GM12878 (cell line): ENCODE measurements at regions of chr6 and their contacts with region 1.

Region 1: DNA sequence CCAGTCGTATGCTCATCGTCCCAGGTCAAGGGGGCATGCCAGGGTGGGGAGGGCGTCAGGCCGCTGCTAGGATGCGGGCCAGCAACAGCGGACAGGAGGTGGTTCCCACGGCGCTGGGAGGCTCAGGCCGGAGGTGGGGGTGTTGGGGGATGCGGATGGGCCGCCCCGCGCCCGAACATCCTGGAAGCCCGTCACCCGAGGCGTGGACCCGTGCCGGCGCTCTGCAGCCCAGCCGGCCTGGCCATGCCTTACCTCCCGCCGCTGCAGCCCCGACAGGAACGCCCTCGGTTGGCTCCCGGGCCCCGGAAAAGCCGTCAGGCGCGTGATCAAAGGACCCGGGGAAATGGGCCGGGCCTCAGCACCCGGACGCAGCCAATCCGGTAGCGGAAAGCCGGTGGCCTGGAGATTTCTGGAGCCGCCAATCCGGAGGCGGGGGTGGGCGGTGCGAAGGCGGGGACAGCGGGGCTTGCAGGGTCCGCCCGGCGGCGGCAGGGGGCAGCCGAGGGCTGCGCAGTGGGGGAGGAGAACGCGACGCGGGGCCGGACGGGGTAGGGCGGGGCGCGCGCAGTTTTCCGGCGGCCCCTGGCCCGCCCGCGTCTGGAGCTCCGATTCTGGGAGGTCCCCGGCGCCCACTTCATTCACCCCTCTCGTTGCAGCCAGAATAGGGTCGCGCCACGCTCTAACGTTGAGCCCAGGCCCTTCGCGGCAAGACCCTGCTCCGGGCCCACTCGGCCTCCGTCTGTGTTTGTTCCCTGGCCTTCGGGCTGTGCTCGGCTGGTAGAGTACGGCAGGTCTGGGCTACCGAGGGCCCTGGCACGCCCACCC is at the start of gene SMIM29:
- DNase-seq: peak; percentile 62
- ATAC-seq: peak; percentile 88
- H3K4me3 ChIP-seq: peak within 1 kb of the TSS; percentile 84
- H3K27ac ChIP-seq: peak within 1 kb of the TSS; percentile 78
- H3K4me1 ChIP-seq: peaks cover 19% of the 10 kb centered on the region
- H3K27me3 ChIP-seq: no peaks in the 10 kb centered on the region
- CTCF ChIP-seq: peak; percentile 82 to 86 (median 86)
- EP300 ChIP-seq: no peak
- POLR2A ChIP-seq: peak; percentile 91
- RAD21 ChIP-seq: peak; percentile 81
- polyA plus RNA-seq, gene SMIM29: 7.1 to 8.4 TPM

Region 2: GRCh38 chr6:33914645-33915044 is 334.3 kb before region 1 on chr6:
- CTCF ChIA-PET with region 1: no interaction called
- POLR2A ChIA-PET with region 1: no interaction called
- RAD21 ChIA-PET with region 1: no interaction called
- SMC1A ChIA-PET with region 1: no interaction called
- in situ Hi-C with region 1: no loop called
- intact Hi-C with region 1: no loop called
- DNase-seq: no peak
- ATAC-seq: peak; percentile 68
- H3K4me3 ChIP-seq: no peak overlapping the region
- H3K27ac ChIP-seq: no peak overlapping the region
- H3K4me1 ChIP-seq: peaks cover 13% of the 10 kb centered on the region
- H3K27me3 ChIP-seq: no peaks in the 10 kb centered on the region
- CTCF ChIP-seq: no peak
- EP300 ChIP-seq: no peak
- POLR2A ChIP-seq: no peak
- RAD21 ChIP-seq: no peak

Region 3: DNA sequence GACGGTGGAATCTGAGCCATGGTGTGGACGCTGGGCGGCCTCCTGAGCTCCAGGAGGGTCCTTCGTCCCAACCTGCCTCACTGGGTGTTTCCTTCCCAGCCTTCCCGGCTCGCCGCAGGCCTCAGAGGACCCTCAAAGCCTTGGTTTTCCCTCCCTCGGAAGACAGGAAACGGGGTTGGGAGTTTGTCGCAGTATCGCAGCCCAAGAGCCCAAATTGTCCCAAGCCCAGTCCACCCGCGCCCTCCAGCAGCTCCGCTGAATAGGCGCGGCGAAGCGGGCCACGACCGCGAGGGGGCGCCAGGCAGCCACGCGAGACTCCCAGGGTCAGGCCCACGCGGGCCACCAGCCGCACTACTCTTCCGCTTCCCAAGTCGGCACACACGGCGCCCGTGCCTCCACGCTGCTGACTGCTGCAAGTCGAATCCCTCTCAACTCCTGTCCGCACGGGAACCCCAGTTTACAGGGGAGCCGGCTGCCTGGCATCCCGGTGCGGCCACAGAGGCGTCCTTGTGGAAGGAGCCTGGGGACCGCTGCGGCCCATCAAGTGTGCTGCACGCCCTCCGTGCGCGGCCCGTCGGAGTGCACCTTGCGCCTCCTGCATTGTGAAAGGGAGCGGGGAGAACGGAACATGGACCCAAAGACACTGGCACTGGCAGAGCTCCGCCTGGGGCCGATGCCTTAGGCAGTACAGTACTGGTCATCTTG is 52.7 kb before region 1 on chr6:
- CTCF ChIA-PET with region 1: interaction called, 55 read pairs
- POLR2A ChIA-PET with region 1: interaction called, 4 read pairs
- RAD21 ChIA-PET with region 1: interaction called, 37 read pairs
- SMC1A ChIA-PET with region 1: interaction called, 20 read pairs
- in situ Hi-C with region 1: no loop called
- intact Hi-C with region 1: loop called (anchors 2 kb)
- DNase-seq: peak; percentile 28
- ATAC-seq: peak; percentile 99
- H3K4me3 ChIP-seq: peak overlapping the region; percentile 64
- H3K27ac ChIP-seq: no peak overlapping the region
- H3K4me1 ChIP-seq: peaks cover 8% of the 10 kb centered on the region
- H3K27me3 ChIP-seq: peaks cover 0 to 2% of the 10 kb centered on the region in 2 experiments; a peak in 1 of 4 replicates
- CTCF ChIP-seq: peak; percentile 94 to 98 (median 96)
- EP300 ChIP-seq: 0 out of 4 replicates have a peak, but pooled peaks of 1 of the 2 experiments have one; percentile 42
- POLR2A ChIP-seq: peak; percentile 77
- RAD21 ChIP-seq: peak; percentile 86

Region 4: DNA sequence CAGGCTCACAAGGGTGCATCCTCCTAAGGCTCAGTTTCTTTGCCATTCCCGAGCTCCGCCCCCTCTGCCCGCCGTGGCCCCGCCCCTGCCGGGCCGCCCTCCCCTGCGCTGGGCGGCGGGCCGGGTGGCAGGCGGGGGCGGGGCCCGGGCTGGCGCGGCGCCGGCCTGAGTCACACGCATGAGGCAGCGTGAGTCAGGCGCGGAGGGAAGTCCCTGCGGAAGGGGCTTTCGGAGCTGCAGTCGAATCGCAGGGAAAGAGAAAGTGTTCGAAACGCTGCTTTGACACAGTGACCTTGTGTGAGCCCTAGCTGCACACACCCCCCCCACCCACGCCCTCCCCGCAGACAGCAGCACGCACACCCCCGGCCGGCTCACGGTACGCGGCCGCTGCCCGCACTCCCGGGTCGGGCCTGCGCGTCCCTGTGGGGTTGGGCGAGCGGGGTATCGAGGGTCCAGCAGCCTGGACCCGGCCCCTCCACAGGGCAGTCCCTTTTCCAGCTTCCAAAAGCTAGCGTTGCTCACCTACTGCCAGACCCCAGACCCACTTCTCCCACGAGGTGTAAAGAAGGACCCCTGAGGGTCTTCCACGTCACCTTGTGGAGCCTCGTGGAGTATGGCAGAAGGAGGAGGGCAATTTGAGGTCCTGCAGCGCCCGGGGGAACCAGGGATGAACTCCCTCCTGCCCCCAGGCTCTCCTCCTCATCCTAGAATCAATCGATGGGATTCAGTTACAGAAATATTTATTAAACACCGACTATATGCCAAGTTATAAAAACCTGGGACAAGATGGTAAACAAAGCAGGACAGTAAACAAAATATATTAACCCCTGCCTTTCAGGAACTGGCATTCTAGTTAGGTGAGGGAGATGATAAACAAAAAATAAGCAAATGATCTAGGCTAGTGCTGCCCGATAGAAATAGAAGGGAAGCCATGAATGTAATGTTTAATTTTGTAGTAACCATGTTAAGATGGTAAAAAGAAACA is 24.7 kb before region 1 on chr6:
- CTCF ChIA-PET with region 1: interaction called, 4 read pairs
- POLR2A ChIA-PET with region 1: interaction called, 11 read pairs
- RAD21 ChIA-PET with region 1: interaction called, 7 read pairs
- SMC1A ChIA-PET with region 1: interaction called, 4 read pairs
- in situ Hi-C with region 1: no loop called
- intact Hi-C with region 1: no loop called
- DNase-seq: peak; percentile 88
- ATAC-seq: peak; percentile 97
- H3K4me3 ChIP-seq: peak overlapping the region; percentile 68
- H3K27ac ChIP-seq: peak overlapping the region; percentile 96
- H3K4me1 ChIP-seq: peaks cover 31% of the 10 kb centered on the region
- H3K27me3 ChIP-seq: no peaks in the 10 kb centered on the region
- CTCF ChIP-seq: no peak
- EP300 ChIP-seq: peak in 1 of 2 experiments; percentile 42; a peak in 2 of 4 replicates
- POLR2A ChIP-seq: peak; percentile 84
- RAD21 ChIP-seq: no peak

Region 5: GRCh38 chr6:34236131-34236996 is 12.6 kb before region 1 on chr6 and contains the start of gene HMGA1:
- CTCF ChIA-PET with region 1: interaction called, 6 read pairs
- POLR2A ChIA-PET with region 1: interaction called, 6 read pairs
- RAD21 ChIA-PET with region 1: interaction called, 11 read pairs
- SMC1A ChIA-PET with region 1: no interaction called
- in situ Hi-C with region 1: no loop called
- intact Hi-C with region 1: no loop called
- DNase-seq: peak; percentile 51
- ATAC-seq: peak; percentile 83
- H3K4me3 ChIP-seq: peak within 1 kb of the TSS; percentile 93
- H3K27ac ChIP-seq: peak within 1 kb of the TSS; percentile 94
- H3K4me1 ChIP-seq: peaks cover 21% of the 10 kb centered on the region
- H3K27me3 ChIP-seq: no peaks in the 10 kb centered on the region
- CTCF ChIP-seq: no peak
- EP300 ChIP-seq: no peak
- POLR2A ChIP-seq: peak; percentile 96
- RAD21 ChIP-seq: no peak
- polyA plus RNA-seq, gene HMGA1: 13.4 to 38.0 TPM

Region 6: GRCh38 chr6:34386316-34387137 is 137.6 kb after region 1 on chr6:
- CTCF ChIA-PET with region 1: interaction called, 54 read pairs
- POLR2A ChIA-PET with region 1: interaction called, 5 read pairs
- RAD21 ChIA-PET with region 1: interaction called, 46 read pairs
- SMC1A ChIA-PET with region 1: interaction called, 44 read pairs
- in situ Hi-C with region 1: no loop called
- intact Hi-C with region 1: no loop called
- DNase-seq: no peak
- ATAC-seq: peak; percentile 14
- H3K4me3 ChIP-seq: no peak overlapping the region
- H3K27ac ChIP-seq: no peak overlapping the region
- H3K4me1 ChIP-seq: no peaks in the 10 kb centered on the region
- H3K27me3 ChIP-seq: no peaks in the 10 kb centered on the region
- CTCF ChIP-seq: no peak
- EP300 ChIP-seq: no peak
- POLR2A ChIP-seq: no peak
- RAD21 ChIP-seq: no peak

Region 7: GRCh38 chr6:34392497-34393190 is 143.7 kb after region 1 on chr6 and contains the start of gene NUDT3:
- CTCF ChIA-PET with region 1: interaction called, 54 read pairs
- POLR2A ChIA-PET with region 1: interaction called, 6 read pairs
- RAD21 ChIA-PET with region 1: interaction called, 46 read pairs
- SMC1A ChIA-PET with region 1: interaction called, 44 read pairs
- in situ Hi-C with region 1: no loop called
- intact Hi-C with region 1: loop called (anchors 2 kb)
- DNase-seq: peak; percentile 83
- ATAC-seq: peak; percentile 90
- H3K4me3 ChIP-seq: peak within 1 kb of the TSS; percentile 99
- H3K27ac ChIP-seq: peak within 1 kb of the TSS; percentile 75
- H3K4me1 ChIP-seq: peaks cover 3% of the 10 kb centered on the region
- H3K27me3 ChIP-seq: no peaks in the 10 kb centered on the region
- CTCF ChIP-seq: peak; percentile 90 to 93 (median 90)
- EP300 ChIP-seq: no peak
- POLR2A ChIP-seq: peak; percentile 95
- RAD21 ChIP-seq: peak; percentile 64
- polyA plus RNA-seq, gene NUDT3: 2.4 to 23.6 TPM

Region 8: DNA sequence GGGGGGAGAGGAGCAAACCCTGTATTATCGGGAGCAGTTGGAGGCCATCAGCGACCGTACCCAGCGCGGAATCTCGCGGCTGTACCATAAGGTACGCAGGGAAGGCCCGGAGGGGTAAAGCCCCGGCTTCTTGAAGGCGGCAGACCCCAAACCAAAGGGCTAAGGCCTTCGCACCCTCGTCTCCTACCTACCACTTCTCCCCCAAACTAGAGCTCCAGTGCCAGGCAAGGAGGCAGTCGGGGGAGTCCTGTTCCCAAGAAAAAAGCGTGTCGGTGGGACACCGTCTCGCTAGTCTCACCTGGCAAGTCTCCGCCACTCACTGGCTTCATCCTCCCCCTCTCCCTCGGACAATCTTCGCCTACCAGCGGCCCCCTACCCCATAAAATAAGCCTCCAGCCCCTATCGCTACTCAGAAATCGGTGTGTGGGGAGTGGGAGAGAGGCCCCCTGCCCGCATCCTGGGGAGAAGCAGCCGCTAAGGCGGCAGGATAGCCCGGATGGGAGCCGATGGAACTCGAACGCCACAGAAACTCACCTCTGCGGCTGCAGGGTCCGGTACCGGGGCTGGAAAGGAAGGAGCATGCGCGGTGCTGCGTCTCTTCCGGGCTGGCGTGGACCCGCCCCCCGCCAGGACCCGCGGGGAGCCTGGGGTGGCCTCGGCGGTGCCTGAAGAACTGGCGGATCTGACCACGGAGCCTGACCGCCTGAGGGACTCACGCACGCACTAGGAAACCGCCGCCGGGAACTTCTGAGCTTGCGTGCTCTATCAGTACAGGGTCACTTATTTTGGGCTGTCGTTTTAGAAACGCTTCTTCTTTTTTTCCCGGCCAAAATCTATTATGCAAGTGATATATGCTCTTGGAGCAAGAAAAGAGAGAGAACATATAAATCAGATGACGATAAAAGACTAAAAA is 176.8 kb after region 1 on chr6 and contains the start of gene RPS10:
- CTCF ChIA-PET with region 1: interaction called, 12 read pairs
- POLR2A ChIA-PET with region 1: interaction called, 15 read pairs
- RAD21 ChIA-PET with region 1: interaction called, 8 read pairs
- SMC1A ChIA-PET with region 1: interaction called, 22 read pairs
- in situ Hi-C with region 1: no loop called
- intact Hi-C with region 1: no loop called
- DNase-seq: peak; percentile 67
- ATAC-seq: peak; percentile 89
- H3K4me3 ChIP-seq: peak within 1 kb of the TSS; percentile 96
- H3K27ac ChIP-seq: peak within 1 kb of the TSS; percentile 96
- H3K4me1 ChIP-seq: peaks cover 6% of the 10 kb centered on the region; the same call in 1 of the 2 replicates
- H3K27me3 ChIP-seq: no peaks in the 10 kb centered on the region
- CTCF ChIP-seq: no peak
- EP300 ChIP-seq: peak; percentile 24 to 54; a peak in 1 of 4 replicates
- POLR2A ChIP-seq: peak; percentile 95
- RAD21 ChIP-seq: no peak
- polyA plus RNA-seq, gene RPS10: 2,067 to 2,394 TPM

Region 9: DNA sequence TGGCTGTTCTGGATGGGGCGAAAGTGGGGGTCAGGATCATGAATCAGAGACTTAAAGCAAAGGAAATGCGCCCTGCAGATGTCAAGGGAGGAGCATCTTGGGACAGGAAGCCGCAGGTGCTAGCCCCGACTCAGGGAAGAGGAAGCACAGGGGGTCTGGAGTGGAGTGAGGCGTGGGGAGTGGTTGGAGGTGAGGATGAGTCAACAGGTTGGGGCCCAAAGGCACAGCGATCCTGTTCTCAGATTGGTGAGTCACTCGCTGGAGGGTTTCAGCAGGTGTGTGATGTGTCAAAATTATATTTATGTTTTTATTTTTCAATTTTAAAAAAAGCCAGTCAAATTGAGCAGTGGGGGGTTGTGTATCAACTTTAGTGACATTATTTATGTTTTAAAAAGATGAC is 236.0 kb after region 1 on chr6:
- CTCF ChIA-PET with region 1: no interaction called
- POLR2A ChIA-PET with region 1: no interaction called
- RAD21 ChIA-PET with region 1: no interaction called
- SMC1A ChIA-PET with region 1: no interaction called
- in situ Hi-C with region 1: no loop called
- intact Hi-C with region 1: no loop called
- DNase-seq: peak; percentile 8
- ATAC-seq: peak; percentile 84
- H3K4me3 ChIP-seq: no peak overlapping the region
- H3K27ac ChIP-seq: no peak overlapping the region
- H3K4me1 ChIP-seq: peaks cover 5% of the 10 kb centered on the region
- H3K27me3 ChIP-seq: no peaks in the 10 kb centered on the region
- CTCF ChIP-seq: no peak
- EP300 ChIP-seq: 0 out of 4 replicates have a peak, but pooled peaks of 1 of the 2 experiments have one; percentile 21
- POLR2A ChIP-seq: no peak
- RAD21 ChIP-seq: no peak